Left cardiac atrium (tissue), 4 donors: ENCODE measurements at regions of chr3 and their contacts with region 1.

Region 1: GRCh38 chr3:13648060-13649001 is 99.4 kb downstream of the FBLN2 start:
- DNase-seq: peak; percentile 83
- ATAC-seq: peak; percentile 82 to 84

Region 2: DNA sequence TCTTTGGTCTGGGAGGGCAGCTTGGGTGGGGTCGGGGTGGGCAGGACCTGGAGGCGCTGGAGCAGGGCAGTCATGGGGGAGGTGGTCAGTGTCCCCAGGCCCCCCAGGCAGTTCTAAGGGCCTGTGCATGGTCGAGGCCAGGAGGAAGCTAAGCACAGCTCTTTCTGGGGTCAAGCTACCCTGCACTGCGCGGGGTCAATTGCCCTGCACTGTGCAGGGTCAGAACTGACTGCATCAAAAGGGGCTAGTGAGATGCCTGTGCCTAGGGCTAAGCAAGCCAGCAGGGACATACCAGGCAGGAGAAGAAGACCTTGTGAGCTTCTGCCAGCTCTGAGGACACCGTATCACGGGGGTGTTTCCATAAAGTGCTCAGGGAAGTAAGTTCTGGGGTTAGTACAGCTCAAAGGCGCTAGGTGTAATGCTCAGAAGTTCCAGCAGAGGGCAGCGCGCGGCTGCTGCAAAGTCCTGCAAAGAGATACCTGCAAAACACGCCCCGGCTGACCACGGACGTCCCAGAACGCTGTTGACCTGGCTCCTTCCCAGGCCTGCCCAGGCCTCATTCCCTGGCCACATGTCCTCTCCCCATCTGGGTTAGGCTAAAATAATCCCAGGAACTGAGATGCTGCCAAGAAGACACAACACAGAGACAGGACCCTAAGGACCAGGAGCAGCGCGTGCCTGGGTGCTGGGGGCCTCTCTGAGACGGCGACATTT is 556.3 kb before region 1 on chr3:
- intact Hi-C with region 1: loop called (anchors 2 to 10 kb)
- DNase-seq: peak; percentile 85
- ATAC-seq: peak; percentile 77 to 86

Region 3: GRCh38 chr3:13452490-13453335 is 195.6 kb before region 1 on chr3:
- intact Hi-C with region 1: no loop called
- DNase-seq: no peak
- ATAC-seq: peak; percentile 49 to 60

Region 4: GRCh38 chr3:13495921-13496723 is 152.2 kb before region 1 on chr3:
- intact Hi-C with region 1: loop called (anchors 1 to 2 kb)
- DNase-seq: peak; percentile 82
- ATAC-seq: peak; percentile 87

Region 5: DNA sequence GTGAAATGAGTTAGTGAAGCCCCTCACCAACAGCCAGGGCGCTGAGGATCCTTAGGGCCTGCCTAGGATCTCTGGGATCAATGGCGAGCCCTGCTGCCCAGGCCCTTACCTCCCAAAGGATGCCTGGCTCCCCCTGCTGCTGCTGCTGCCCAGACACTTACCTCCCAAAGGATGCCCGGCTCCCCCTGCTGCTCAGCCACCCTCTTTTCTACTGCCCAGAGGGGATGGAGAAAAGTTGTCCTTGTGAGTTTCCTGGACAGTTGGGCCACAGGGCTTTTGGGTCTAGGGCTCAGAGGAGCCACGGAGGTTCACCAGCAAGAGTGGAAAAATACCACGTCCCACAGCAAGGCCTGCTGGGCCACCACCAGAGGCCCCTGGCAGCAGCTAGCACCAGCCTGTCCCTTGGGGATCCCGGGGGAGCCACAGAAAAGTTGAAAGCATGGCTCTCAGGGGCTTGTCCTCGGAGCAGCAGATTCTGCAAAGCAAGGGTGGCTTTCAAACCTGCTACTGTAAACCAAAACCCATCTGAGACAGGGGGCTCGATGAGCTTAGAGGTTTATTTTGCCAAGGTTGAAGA is 813.5 kb after region 1 on chr3:
- intact Hi-C with region 1: loop called in 1 of 2 experiments (anchors 10 kb)
- DNase-seq: no peak
- ATAC-seq: peak; percentile 6 to 31